ENCODE measurements at regions of chr17 and their contacts with region 1.

Region 1: GRCh38 chr17:8057691-8058114 is 18.8 kb downstream of the ALOX15B start:
- DNase-seq: peak; percentile 60
- H3K4me3 Mint-ChIP-seq: no peak overlapping the region
- H3K27ac Mint-ChIP-seq: no peak overlapping the region
- H3K4me1 Mint-ChIP-seq: peaks cover 3% of the 10 kb centered on the region
- H3K27me3 Mint-ChIP-seq: peaks cover 49% of the 10 kb centered on the region

Region 2: DNA sequence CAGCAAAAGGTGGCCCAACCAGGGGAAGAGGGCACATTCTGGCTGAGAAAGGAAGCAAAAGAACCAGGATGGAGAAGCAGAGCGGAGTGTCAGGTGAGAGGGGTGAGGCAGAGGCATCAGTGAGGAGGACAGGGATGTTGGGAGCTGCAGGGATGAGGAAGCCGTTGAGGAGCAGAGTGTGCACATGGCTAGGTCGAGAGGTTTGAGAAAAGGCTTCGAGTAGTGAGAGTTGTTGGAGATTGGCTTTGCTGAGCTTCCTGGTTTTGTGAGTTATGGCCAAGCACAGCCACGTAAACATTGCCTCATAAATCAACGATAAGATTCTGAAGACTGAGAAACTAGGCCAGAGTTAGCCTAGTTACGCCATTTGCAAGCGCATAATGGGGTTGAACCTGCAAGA is 313.3 kb before region 1 on chr17:
- CTCF ChIA-PET with region 1: interaction called, 7 read pairs
- intact Hi-C with region 1: loop called (anchors 1 kb)
- DNase-seq: no peak
- H3K4me3 Mint-ChIP-seq: no peak overlapping the region
- H3K27ac Mint-ChIP-seq: no peak overlapping the region
- H3K4me1 Mint-ChIP-seq: no peaks in the 10 kb centered on the region
- H3K27me3 Mint-ChIP-seq: peaks cover 8% of the 10 kb centered on the region

Region 3: DNA sequence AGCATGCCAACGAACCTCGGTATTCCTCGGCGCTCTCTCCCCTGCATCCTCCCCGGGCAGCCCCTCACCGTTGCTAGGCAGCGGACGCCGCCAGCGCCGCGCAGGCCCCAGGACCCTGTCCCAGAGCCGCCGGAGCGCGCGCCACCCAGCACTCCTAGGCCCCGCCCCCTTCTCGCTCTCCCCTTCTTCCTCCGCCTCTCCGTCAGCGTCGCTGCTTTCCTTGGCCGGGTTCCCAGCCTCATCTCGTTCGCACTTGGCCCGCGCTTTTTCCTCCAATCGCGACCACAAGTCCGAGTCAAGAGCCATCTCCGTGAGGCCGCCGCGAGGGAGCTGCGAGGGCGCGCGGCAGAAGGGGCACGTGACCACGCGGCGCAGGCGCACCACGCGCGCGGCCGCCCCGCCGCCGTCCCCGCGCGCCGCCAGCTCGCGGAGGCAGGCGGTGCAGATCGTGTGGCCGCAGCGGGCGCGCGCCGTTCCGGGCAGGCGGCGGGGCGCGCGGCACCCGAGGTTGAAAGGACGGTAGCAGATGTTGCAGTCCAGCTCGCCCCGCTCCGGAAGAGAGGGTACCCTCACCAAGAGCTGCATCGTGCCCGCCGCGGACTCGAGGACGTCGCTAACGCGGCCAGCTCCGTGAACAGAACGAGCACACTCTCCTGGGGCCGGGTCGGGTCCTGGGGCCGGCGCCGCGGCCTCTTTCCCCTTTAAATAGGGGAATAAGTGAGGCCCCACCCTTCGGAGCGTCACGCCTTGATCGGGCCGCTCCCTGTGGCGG is 141.9 kb before region 1 on chr17 and contains the start of gene RNF227:
- CTCF ChIA-PET with region 1: interaction called, 6 read pairs
- intact Hi-C with region 1: loop called (anchors 1 kb)
- DNase-seq: peak; percentile 91
- H3K4me3 Mint-ChIP-seq: peak within 1 kb of the TSS; percentile 93
- H3K27ac Mint-ChIP-seq: peak within 1 kb of the TSS; percentile 92
- H3K4me1 Mint-ChIP-seq: peaks cover 29% of the 10 kb centered on the region
- H3K27me3 Mint-ChIP-seq: no peaks in the 10 kb centered on the region
- total RNA-seq, gene RNF227: 3.1 to 3.8 TPM

Region 4: GRCh38 chr17:8016632-8017478 is 40.8 kb before region 1 on chr17:
- CTCF ChIA-PET with region 1: interaction called, 10 read pairs
- intact Hi-C with region 1: loop called (anchors 1 kb)
- DNase-seq: peak; percentile 80
- H3K4me3 Mint-ChIP-seq: peak overlapping the region; percentile 61
- H3K27ac Mint-ChIP-seq: no peak overlapping the region
- H3K4me1 Mint-ChIP-seq: peaks cover 4% of the 10 kb centered on the region
- H3K27me3 Mint-ChIP-seq: peaks cover 6% of the 10 kb centered on the region

Region 5: DNA sequence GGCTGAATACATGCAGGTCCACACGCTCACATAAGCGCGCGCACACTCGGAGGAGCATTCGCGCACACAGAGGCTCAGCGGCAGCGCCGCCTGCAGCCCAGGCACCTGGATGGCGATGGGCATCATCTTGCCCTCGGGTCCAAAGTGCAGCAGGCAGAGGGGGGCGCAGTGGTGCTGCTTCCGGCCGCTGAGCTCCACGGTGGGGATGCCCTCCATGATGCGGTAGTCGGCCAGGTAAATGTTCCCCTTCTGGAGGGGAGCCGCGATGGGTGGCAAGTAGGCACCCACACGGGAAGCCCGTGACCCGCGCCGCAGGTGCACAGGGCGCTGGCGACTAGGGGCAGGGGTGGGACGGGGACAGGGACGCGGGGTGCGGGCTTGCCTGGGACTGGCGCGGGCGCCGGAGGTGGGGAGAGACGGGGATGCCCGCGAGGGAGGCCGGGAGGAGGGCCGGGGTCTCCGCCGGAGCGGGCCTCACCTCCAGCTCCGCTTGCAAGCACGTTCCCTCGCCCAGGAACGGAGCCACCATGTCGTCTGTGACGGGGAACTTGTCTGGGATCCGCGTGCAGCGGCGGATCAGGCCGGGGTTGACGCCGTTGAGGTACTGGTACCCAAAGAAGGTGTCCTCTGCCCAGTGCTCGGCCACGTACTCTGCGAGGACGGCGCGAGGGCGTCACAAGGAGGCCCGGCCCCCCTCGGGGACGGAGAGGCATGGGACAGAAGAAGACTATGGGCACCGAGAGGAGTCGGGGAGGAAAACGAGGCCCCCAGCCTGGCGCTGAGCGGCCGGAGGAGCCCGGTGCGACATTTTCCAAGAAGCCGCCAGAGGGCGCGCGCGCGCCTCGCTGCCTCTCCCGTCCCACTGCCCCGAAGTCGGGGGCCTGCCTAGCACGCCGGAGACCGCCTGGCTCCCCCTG is 21.8 kb after region 1 on chr17:
- CTCF ChIA-PET with region 1: interaction called, 204 read pairs
- intact Hi-C with region 1: loop called (anchors 1 kb)
- DNase-seq: peak; percentile 91
- H3K4me3 Mint-ChIP-seq: peak overlapping the region; percentile 95
- H3K27ac Mint-ChIP-seq: peak overlapping the region; percentile 88
- H3K4me1 Mint-ChIP-seq: peaks cover 13% of the 10 kb centered on the region
- H3K27me3 Mint-ChIP-seq: peaks cover 2% of the 10 kb centered on the region

Region 6: DNA sequence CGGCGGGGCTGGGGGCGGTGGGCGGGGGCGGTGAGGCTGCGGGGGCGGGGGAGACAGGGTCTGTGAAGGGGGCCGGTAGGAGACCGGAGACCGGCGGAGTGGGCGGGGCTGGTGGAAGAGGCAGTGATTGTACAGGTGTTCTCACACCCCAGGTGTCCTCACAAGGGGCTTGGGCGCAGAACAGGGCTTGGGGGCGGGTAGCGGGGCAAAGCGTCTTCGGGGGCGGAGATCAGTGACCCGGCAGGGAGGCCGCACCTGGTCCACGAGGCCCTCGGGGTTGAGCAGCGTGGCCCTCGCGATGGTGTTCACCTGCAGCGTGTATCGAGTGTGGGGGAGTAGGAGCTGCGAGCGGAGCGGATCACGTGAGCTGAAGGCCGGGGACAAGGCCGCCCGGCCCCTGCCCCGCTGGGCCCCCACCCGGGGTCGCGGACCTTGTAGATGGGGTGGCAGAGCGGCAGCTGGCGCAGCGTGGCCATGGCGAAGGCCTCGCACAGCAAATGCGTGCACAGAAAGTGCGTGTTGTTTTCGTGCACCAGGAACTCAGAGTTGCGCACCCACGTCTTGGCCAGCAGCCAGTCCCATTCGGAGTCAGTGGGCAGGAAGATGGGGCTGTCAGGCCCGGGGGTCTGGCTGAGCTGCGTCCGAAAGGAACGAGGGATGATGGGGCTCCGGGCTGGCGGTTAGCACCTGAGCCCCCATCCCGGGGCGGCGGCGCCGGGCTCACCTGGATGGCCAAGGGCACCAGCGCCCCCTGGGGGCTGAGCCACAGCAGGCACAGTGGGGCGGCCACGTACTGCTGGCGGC is 52.2 kb after region 1 on chr17:
- CTCF ChIA-PET with region 1: interaction called, 41 read pairs
- intact Hi-C with region 1: loop called (anchors 1 kb)
- DNase-seq: peak; percentile 81
- H3K4me3 Mint-ChIP-seq: peak overlapping the region; percentile 34
- H3K27ac Mint-ChIP-seq: no peak overlapping the region
- H3K4me1 Mint-ChIP-seq: peaks cover 2% of the 10 kb centered on the region
- H3K27me3 Mint-ChIP-seq: peaks cover 6% of the 10 kb centered on the region

Measured in activated naive CD4-positive, alpha-beta T cell treated with anti-CD3 and anti-CD28 coated beads for 36 hours (primary cell).